ENCODE measurements at regions of chr15 and their contacts with region 1.

Region 1: GRCh38 chr15:64651573-64652260 is 123.7 kb downstream of the RBPMS2 start:
- DNase-seq: no peak
- H3K4me3 ChIP-seq: no peak overlapping the region
- H3K27ac ChIP-seq: no peak overlapping the region
- H3K27me3 ChIP-seq: no peaks in the 10 kb centered on the region
- CTCF ChIP-seq: no peak

Region 2: GRCh38 chr15:64209680-64210334 is 441.9 kb before region 1 on chr15:
- intact Hi-C with region 1: no loop called
- DNase-seq: no peak
- H3K4me3 ChIP-seq: no peak overlapping the region
- H3K27ac ChIP-seq: no peak overlapping the region
- H3K27me3 ChIP-seq: no peaks in the 10 kb centered on the region
- CTCF ChIP-seq: peak in 52 of 56 donors; percentile 10 to 62 (median 40)

Region 3: GRCh38 chr15:64430000-64430735 is 221.5 kb before region 1 on chr15:
- intact Hi-C with region 1: loop called in 1 of 2 experiments (anchors 5 kb)
- DNase-seq: peak in 1 of 10 donors; percentile 5
- H3K4me3 ChIP-seq: no peak overlapping the region
- H3K27ac ChIP-seq: peak overlapping the region in 3 of 59 donors; percentile 18 to 51 (median 21)
- H3K27me3 ChIP-seq: no peaks in the 10 kb centered on the region
- CTCF ChIP-seq: no peak

Region 4: GRCh38 chr15:64515196-64515595 is 136.5 kb before region 1 on chr15:
- intact Hi-C with region 1: loop called in 1 of 2 experiments (anchors 10 kb)
- DNase-seq: no peak
- H3K4me3 ChIP-seq: no peak overlapping the region
- H3K27ac ChIP-seq: peak overlapping the region in 38 of 59 donors; percentile 2 to 68 (median 32)
- H3K27me3 ChIP-seq: no peaks in the 10 kb centered on the region
- CTCF ChIP-seq: no peak

Measured in dorsolateral prefrontal cortex (tissue), 120 donors.